ENCODE measurements at regions of chr4 and their contacts with region 1.

Region 1: DNA sequence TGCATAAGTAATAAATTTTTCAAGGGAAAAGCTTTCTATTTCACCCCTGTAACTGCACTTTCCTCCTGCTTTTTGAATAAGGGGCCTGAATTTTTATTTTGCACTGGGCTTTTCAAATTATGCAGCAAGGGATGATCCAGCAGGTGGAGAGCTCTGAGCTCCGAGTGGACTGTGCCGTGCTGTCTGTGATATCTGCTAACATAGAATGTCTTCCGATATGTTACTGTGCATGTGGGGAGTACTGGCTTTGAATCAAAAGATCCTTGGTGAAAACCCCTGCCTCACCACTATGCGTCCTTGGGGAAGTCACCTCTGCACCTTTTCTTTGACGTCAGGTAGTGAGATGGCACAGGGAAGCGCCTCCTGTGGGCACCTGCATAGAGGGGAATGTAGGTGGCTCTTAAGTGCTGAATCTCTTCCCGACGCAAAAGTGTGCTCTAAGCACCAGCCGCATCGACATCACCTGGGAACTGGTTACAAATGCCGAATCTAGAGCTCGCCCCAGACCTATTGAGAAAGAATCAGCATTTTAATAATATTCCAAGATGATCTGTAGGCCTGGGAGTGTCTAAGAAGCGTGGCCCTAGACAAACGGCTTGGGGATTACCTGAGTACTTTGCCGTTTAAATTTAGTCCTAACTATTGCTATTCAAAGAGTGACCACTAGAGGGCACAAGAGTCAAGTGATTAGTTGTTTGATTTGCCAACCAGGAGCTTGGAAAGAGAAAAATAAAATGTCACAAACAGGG is 19.2 kb upstream of the WFS1 start:
- DNase-seq: no peak
- H3K4me3 Mint-ChIP-seq: no peak overlapping the region
- H3K27ac Mint-ChIP-seq: no peak overlapping the region
- H3K4me1 Mint-ChIP-seq: peaks cover 5% of the 10 kb centered on the region
- H3K27me3 Mint-ChIP-seq: peaks cover 39% of the 10 kb centered on the region

Region 2: DNA sequence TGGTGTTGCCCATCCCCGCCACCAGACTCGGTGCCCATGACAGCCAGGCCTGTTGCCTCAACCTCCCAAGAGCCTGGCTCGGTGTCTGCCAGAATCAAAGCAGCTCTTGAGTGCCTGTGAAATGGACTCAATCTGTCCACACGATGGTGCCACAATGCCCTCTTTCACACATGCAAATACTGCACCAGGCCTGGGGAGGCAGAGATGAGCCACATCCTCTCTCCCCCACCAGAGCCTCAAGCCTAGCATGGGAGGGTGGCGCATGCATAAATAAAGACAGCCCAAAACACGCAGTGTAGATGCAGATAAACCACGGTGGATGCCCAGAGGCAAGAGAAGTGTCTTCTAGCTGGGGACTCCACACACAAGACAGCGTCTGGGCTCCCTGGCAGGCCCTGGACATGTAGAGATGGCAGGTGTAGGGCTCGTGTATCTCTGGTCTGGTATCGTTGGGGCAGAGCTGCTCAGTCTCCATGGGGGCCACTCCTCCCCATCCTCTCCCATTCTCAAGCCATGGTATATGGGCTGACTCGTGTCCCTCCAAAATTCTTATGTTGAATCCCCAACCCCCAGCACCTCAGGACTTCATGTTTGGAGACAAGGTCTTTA is 115.7 kb before region 1 on chr4:
- CTCF ChIA-PET with region 1: interaction called, 92 read pairs
- POLR2A ChIA-PET with region 1: interaction called, 10 read pairs
- DNase-seq: peak; percentile 85
- H3K4me3 Mint-ChIP-seq: no peak overlapping the region
- H3K27ac Mint-ChIP-seq: peak overlapping the region; percentile 77
- H3K4me1 Mint-ChIP-seq: peaks cover 41% of the 10 kb centered on the region
- H3K27me3 Mint-ChIP-seq: no peaks in the 10 kb centered on the region

Region 3: GRCh38 chr4:6221851-6222760 is 28.3 kb before region 1 on chr4:
- CTCF ChIA-PET with region 1: interaction called, 13 read pairs
- POLR2A ChIA-PET with region 1: no interaction called
- DNase-seq: no peak
- H3K4me3 Mint-ChIP-seq: no peak overlapping the region
- H3K27ac Mint-ChIP-seq: no peak overlapping the region
- H3K4me1 Mint-ChIP-seq: peaks cover 1% of the 10 kb centered on the region
- H3K27me3 Mint-ChIP-seq: peaks cover 68% of the 10 kb centered on the region

Region 4: GRCh38 chr4:6269616-6270511 is 19.5 kb after region 1 on chr4 and contains the start of gene WFS1:
- CTCF ChIA-PET with region 1: interaction called, 46 read pairs
- POLR2A ChIA-PET with region 1: interaction called, 3 read pairs
- DNase-seq: peak; percentile 98
- H3K4me3 Mint-ChIP-seq: peak within 1 kb of the TSS; percentile 72
- H3K27ac Mint-ChIP-seq: no peak within 1 kb of the TSS
- H3K4me1 Mint-ChIP-seq: peaks cover 27% of the 10 kb centered on the region
- H3K27me3 Mint-ChIP-seq: peaks cover 52% of the 10 kb centered on the region
- total RNA-seq, gene WFS1: 2.4 to 3.5 TPM

Region 5: DNA sequence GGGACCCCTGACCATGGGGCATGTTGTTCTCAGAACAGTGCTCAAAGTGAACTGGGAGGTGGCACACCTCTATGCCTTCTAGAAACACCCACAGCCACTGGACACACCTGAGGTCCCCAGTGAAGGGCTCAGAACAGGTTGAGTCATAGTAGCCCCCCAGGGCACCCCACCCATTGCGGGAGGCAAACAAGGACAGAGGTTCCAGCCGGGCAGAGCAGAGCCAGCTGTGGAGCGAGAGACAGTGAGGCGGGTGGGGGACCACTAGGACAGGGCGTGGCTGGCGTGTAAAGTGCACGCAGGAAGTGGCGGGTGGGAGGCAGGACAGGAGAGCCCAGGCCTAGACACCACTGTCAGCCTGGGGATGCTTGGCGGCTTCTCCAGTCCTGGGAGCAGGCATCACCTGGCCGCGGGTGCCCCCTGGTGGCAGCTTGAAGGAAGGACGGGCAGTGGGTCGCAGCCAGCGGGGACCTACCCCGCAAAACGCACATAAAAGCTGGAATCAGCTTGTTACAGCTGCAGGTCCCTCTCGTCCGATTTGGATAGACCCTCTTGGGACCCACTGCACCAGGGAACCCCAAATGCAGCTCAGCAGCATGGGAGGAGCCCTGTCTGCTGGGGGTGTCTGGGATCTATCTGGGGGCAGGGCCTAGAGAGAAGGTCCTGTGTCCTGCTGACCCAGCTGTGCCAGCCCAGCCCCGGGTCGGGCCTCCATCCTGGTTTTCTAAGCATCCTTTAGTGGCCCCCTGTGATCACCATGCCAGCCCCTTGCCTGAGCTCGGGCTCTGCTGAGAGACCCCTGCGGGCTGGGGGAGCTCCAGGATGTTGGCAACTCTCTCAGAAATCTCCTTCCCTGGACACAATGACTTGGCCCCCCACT is 76.9 kb after region 1 on chr4:
- CTCF ChIA-PET with region 1: interaction called, 341 read pairs
- POLR2A ChIA-PET with region 1: interaction called, 8 read pairs
- DNase-seq: peak; percentile 84
- H3K4me3 Mint-ChIP-seq: no peak overlapping the region
- H3K27ac Mint-ChIP-seq: no peak overlapping the region
- H3K4me1 Mint-ChIP-seq: peaks cover 28% of the 10 kb centered on the region
- H3K27me3 Mint-ChIP-seq: peaks cover 34% of the 10 kb centered on the region

Region 6: GRCh38 chr4:6546681-6547447 is 296.5 kb after region 1 on chr4:
- CTCF ChIA-PET with region 1: interaction called, 12 read pairs
- POLR2A ChIA-PET with region 1: no interaction called
- DNase-seq: peak; percentile 58
- H3K4me3 Mint-ChIP-seq: no peak overlapping the region
- H3K27ac Mint-ChIP-seq: no peak overlapping the region
- H3K4me1 Mint-ChIP-seq: no peaks in the 10 kb centered on the region
- H3K27me3 Mint-ChIP-seq: peaks cover 14% of the 10 kb centered on the region